ENCODE measurements at regions of chr4 and their contacts with region 1.

Region 1: DNA sequence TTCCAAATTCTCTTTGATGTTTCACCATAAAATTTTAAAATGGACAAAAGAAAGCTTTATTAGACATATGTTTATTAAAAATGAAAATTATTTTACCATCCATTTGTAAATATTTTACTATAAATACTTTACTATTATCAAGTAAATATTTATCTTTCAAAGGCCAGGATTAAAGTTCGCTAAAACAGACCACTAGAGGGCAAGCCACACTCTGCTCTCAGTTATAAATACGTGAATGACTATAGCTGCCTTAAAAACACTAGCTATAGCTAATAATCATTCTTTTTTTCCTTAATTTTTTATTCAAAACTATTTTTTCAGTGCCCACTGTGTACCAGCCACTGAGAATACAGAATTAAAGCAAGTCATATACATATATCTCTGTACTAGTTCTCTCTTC is 38.6 kb downstream of the UNC5C start:
- DNase-seq: no peak
- H3K4me3 Mint-ChIP-seq: no peak overlapping the region
- H3K27ac Mint-ChIP-seq: no peak overlapping the region
- H3K4me1 Mint-ChIP-seq: no peaks in the 10 kb centered on the region
- H3K27me3 Mint-ChIP-seq: no peaks in the 10 kb centered on the region
- CTCF ChIP-seq: no peak

Region 2: DNA sequence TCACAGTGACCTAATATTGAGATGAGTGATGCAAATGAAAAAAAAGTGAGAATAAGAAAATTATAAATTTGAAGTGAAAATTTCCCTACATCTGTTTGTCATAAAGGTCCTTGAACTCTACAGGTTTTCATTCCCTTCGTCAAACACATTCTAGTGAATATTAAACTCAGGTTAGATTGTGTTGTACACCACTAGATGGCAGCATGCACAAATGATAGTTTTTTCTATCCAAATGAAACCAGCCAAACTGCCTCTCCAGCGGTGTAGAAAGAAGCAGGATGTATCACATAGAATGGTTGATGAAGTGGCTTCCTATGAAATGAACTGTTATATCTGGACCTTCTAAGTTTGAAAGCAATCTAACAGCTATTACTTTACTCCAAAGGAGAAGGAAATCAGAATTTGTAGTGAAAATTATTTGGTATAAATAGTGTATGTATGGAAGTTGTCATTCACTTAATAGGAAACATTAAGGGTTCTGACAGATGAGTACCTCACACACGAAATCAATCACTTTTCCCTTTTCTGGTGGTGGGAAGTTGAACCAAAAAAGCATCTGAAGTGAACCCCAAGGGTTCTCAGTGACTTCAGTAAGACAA is 344.1 kb before region 1 on chr4:
- CTCF ChIA-PET with region 1: no interaction called
- intact Hi-C with region 1: loop called (anchors 5 kb)
- DNase-seq: peak; percentile 24
- H3K4me3 Mint-ChIP-seq: no peak overlapping the region
- H3K27ac Mint-ChIP-seq: no peak overlapping the region
- H3K4me1 Mint-ChIP-seq: no peaks in the 10 kb centered on the region
- H3K27me3 Mint-ChIP-seq: no peaks in the 10 kb centered on the region
- CTCF ChIP-seq: no peak